Activated naive CD4-positive, alpha-beta T cell treated with anti-CD3 and anti-CD28 coated beads, Interleukin-2, amount 10 ng/mL, durations not matched to agents 7 days and 5 days (primary cell): ENCODE measurements at regions of chr21 and their contacts with region 1.

Region 1: DNA sequence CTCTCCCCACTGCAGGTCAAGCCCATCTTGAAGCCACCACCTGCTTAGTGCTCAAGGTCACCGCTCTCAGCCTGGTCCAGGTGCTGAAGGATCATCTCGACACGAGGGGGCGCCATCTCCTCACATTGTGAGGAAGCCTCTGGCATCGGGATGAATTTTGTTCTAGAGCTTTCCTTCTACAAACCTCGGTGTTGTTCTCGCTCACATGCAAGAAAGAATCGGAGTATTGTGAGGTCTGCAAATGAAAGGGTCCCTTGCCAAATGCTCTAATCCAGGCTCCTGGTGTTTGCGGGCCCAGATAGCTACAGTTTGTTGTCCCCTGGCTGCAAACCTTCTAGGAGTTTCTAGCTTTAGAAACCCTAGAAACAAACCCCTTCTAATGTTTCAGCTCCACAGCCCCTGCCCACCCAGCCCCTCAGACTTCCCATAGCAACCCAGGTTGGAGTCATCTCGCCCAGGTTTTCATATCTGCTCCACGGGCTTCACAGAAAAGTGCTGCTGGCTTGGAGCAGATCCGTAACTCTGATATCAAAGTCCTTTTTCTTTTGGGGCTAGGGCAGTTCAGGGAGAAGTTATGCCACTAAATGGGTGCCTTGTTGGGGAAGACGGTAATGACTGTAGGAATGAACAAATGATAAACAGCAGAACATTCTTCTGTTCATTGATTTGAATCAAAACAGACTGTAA is 8.6 kb upstream of the ATP5PO start:
- DNase-seq: peak; percentile 93
- H3K4me3 Mint-ChIP-seq: no peak overlapping the region
- H3K27ac Mint-ChIP-seq: peak overlapping the region; percentile 4
- H3K4me1 Mint-ChIP-seq: peaks cover 13% of the 10 kb centered on the region
- H3K27me3 Mint-ChIP-seq: peaks cover 10% of the 10 kb centered on the region

Region 2: DNA sequence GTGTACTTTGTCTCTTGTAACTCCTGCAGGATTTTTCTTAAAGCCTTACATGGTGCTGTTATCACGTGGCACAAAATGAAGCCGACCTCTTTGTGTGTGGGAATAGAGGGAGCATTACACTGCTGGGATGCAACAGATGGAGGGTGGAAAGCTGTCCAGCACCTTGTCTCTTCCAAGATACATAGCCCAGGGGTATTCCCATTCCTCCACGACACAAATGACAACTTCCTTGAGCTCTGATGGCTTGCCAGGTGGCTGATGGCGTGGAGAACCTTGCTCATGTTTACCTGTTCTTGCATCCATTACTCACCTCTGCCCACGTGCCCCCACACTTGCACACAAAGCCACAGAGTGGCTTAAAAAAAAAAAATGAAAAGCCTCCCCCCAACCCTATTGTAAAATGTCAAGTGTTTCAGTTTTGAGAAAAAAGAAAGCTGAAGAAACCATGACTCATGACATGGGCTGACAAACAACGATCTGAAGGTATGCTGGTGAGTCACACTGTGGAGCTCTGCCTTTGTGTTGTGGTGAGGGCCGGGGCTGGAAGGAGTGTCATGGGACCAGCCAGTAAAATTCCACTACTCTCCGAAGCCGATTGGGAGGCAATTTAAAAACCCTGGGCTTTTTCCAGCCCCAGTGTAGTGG is 23.4 kb after region 1 on chr21:
- CTCF ChIA-PET with region 1: interaction called, 24 read pairs
- DNase-seq: peak; percentile 91
- H3K4me3 Mint-ChIP-seq: peak overlapping the region; percentile 62
- H3K27ac Mint-ChIP-seq: peak overlapping the region; percentile 99
- H3K4me1 Mint-ChIP-seq: peaks cover 79% of the 10 kb centered on the region
- H3K27me3 Mint-ChIP-seq: no peaks in the 10 kb centered on the region

Region 3: DNA sequence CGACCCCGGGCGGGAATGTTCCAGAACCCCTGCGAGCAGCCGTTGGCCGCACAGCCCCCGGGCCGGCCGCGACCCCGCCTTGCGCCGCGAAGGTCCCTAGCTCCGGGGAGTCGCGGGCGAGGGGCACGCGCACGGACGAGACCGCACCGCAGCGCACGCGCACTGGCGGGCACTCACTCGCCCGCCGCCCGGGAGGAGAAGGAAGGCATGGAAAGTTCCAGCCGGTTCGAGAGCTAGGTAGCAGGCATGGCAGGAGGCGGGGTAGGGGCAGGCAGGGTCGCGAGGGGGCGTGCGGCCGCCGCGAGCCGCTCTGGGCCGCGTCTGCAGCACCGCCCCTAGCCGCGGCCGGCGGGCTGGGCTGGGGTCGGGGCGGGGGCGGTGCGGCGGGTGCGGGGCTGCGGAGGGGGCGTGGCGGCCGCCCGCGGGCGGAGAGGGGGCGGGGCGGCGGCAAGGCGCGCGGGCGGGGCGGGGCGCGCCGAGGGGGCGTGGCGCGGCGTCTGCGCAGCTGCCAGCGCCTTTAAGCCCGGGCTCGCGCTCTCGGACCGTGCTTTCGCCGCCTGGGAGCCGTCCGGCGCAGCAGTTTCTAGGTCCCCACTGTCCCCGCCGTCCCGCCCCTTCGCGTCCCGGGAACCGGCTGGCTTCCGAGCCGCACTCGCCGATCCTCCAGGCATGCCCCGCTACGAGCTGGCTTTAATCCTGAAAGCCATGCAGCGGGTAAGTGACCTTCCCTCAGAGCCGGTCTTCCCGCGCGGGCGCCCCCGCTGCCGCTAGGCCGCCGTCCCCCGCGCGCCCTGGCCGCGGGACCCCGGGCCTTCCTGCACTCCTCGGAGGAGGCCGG is 149.0 kb after region 1 on chr21 and contains the starts of genes MRPS6 and SLC5A3:
- CTCF ChIA-PET with region 1: interaction called, 36 read pairs
- DNase-seq: peak; percentile 77
- H3K4me3 Mint-ChIP-seq: peak within 1 kb of the TSS; percentile 91
- H3K27ac Mint-ChIP-seq: peak within 1 kb of the TSS; percentile 83
- H3K4me1 Mint-ChIP-seq: peaks cover 47% of the 10 kb centered on the region
- H3K27me3 Mint-ChIP-seq: peaks cover 13% of the 10 kb centered on the region

Region 4: DNA sequence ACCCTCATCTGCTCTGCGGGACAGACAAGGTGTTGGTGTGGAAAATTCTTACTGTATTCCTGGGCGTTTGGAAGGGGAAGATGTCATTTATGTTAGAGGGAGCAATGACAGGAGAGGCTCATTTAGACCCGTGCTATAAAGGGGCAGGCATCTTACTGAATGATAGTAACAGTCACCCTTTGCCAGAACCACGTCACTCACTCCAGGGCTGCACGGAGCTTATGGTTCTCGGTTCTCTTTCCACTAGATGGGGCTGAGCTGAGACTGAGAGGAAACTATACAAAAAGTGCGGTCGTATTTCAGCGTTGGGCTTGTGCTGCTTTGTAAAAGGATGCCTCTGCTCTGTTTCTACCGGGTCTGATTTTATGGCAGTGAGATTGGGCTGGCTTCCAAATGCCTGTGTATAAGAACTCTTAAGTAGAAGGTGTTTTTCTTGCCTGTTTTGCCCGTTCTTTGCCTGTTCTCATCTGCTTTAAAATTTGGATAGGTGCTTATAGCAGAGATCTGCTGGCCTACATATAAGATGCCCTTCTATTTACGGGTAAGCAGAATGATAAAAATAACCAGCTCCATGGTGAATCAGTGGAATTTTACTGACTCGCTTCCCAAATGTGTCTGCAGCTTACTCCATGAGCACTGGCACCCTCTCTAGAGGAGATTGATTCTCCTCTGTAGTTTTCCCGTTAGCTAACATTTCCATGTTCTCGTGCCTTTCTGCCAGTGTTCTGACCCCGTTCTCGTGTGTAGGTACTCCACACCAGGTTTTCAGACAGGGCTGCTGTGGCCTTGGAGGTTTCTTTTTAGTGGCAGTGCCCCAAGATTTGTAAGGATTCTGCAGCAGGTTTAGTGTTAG is 205.0 kb after region 1 on chr21:
- CTCF ChIA-PET with region 1: interaction called, 35 read pairs
- DNase-seq: peak; percentile 76
- H3K4me3 Mint-ChIP-seq: peak overlapping the region; percentile 53
- H3K27ac Mint-ChIP-seq: peak overlapping the region; percentile 89
- H3K4me1 Mint-ChIP-seq: peaks cover 71% of the 10 kb centered on the region
- H3K27me3 Mint-ChIP-seq: no peaks in the 10 kb centered on the region

Region 5: DNA sequence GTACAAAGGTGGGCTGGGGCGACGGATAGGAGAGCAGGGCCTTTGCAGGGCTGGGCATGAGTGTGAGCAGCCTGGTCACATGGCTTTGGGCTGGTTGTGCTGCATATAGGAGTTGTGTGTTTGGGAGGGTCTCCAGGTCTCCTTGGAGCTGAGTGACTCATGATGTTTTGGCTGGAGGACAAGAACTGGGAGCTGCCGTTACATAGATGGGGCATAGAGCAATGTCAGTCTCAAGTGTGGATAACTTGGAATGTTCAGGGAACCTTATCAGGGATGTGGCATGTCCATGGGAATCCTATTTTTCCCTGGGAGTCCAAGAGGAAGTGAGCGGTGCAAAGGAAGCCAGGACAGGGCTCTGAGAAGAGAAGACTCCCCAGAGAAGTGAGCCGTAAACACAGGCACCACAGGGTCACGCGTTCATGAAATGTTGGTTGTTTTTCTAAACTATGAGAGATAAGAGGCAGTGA is 303.2 kb after region 1 on chr21:
- CTCF ChIA-PET with region 1: interaction called, 11 read pairs
- DNase-seq: no peak
- H3K4me3 Mint-ChIP-seq: no peak overlapping the region
- H3K27ac Mint-ChIP-seq: no peak overlapping the region
- H3K4me1 Mint-ChIP-seq: no peaks in the 10 kb centered on the region
- H3K27me3 Mint-ChIP-seq: no peaks in the 10 kb centered on the region

Region 6: DNA sequence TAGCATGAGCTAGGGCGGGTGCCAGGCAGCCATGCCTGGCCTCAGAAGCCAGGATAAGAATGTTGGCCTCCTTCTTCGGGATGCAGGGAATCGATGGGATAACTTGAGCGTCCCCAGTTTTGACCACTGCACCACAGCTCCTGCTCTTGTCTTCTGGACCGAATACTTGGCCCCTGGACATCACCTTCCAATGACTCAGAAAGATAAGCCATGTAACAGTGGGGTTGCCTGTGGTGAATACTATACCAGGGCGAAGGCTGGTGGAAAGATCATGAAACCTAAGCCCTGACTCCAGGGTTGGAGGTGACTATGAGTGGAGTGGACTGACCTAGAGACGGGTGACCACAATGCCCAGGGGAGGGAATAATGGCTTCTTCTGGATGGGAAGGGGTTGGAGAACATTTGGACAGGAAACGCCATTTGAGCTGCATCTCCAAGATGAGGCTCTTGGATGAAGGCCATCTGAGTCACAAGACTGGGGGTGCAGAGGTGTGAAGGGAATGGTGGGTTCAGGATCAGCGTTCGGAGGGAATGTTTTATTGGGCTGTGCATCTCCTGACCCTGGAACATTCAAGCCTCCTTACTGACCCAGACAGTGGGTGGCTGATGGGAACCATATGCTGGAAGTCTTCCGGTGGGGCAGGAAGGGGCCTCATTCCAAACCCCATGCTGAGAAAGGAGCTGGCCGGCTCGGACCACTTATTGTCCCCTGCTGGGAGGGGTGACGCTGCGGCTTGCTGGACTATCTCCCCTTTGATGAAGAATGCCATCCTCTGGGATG is 421.1 kb after region 1 on chr21:
- CTCF ChIA-PET with region 1: interaction called, 153 read pairs
- DNase-seq: no peak
- H3K4me3 Mint-ChIP-seq: no peak overlapping the region
- H3K27ac Mint-ChIP-seq: no peak overlapping the region
- H3K4me1 Mint-ChIP-seq: peaks cover 4% of the 10 kb centered on the region
- H3K27me3 Mint-ChIP-seq: peaks cover 28% of the 10 kb centered on the region

Region 7: GRCh38 chr21:34362136-34362444 is 437.9 kb after region 1 on chr21:
- CTCF ChIA-PET with region 1: interaction called, 31 read pairs
- DNase-seq: no peak
- H3K4me3 Mint-ChIP-seq: no peak overlapping the region
- H3K27ac Mint-ChIP-seq: no peak overlapping the region
- H3K4me1 Mint-ChIP-seq: peaks cover 6% of the 10 kb centered on the region
- H3K27me3 Mint-ChIP-seq: peaks cover 25% of the 10 kb centered on the region